ENCODE measurements at regions of chr10 and their contacts with region 1.

Region 1: DNA sequence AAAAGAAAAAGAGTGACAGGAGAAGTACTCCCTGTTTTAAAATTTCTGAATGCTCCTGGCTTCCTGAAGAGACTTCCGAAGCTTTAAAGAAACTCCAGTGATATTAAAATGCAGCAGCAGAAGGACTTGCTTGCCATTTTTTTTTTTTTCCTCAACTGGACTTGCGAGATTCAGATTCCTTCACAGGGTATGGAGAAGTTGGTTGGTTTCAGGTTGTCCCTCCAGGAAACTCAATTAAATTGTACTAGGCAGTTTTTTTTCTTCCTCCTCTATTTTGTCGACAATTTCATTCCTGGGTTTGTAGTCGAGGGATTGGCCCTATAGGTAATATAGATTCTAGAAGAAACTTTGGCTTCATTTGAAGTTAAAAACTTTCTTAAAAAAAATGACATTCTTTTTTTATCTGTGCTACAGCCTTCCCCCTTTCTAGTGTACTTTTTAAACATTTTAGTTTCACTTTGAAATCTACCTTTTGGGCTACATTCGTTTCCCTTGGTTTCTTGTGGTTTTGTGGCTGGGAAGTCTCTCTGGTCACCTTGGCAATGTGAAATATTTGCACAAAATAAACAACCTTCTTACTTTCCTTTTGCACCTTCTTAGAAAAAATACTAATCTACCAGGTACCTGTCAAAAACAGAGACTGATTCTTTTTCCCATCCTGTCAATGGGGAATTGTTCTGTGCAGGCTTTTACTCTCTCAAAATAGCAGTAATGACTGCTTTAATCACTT is 350.1 kb downstream of the GATA3 start:
- DNase-seq: peak in 6 of 9 experiments; percentile 31 to 93 (median 48)
- ATAC-seq: peak; percentile 71
- H3K4me3 ChIP-seq: peak overlapping the region; percentile 14 to 41
- H3K4me3 Mint-ChIP-seq: peak overlapping the region; percentile 74
- H3K27ac ChIP-seq: peak overlapping the region; percentile 66 to 83
- H3K27ac Mint-ChIP-seq: peak overlapping the region; percentile 90
- H3K4me1 ChIP-seq: peaks cover 43% of the 10 kb centered on the region
- H3K4me1 Mint-ChIP-seq: peaks cover 67% of the 10 kb centered on the region
- H3K27me3 ChIP-seq: no peaks in the 10 kb centered on the region
- H3K27me3 Mint-ChIP-seq: no peaks in the 10 kb centered on the region
- CTCF ChIP-seq: no peak

Region 2: DNA sequence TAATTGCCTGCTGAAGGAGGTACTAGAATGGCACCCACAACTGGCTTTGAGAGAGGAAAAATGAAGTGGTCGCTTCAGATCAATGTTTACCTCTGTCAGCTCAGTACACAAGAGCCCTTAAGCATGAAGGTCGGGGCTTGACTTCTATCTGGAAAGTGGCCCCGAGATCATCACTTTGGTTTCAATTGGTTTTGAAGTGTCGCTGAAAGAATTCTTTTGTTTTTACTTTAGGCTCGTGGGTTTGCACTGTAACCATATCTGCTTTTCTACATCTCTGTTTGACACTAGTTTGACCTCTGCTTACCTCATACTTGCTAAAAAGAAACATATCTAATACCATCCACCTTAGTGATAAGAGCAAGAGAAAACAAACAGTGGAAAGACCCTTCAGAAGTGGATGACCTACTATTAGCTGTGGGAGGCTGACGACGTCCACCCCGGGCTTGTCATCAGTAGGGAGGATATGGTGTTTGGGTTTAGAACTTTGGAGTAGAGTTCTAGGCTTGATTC is 11.7 kb after region 1 on chr10:
- CTCF ChIA-PET with region 1: no interaction called
- POLR2A ChIA-PET with region 1: interaction called, 11 read pairs
- intact Hi-C with region 1: loop called in 1 of 2 experiments (anchors 1 kb)
- DNase-seq: peak in 7 of 9 experiments; percentile 18 to 88 (median 44)
- ATAC-seq: peak; percentile 84
- H3K4me3 ChIP-seq: no peak overlapping the region
- H3K4me3 Mint-ChIP-seq: no peak overlapping the region
- H3K27ac ChIP-seq: peak overlapping the region; percentile 50 to 78
- H3K27ac Mint-ChIP-seq: peak overlapping the region; percentile 96
- H3K4me1 ChIP-seq: peaks cover 19% of the 10 kb centered on the region
- H3K4me1 Mint-ChIP-seq: peaks cover 30% of the 10 kb centered on the region
- H3K27me3 ChIP-seq: no peaks in the 10 kb centered on the region
- H3K27me3 Mint-ChIP-seq: no peaks in the 10 kb centered on the region
- CTCF ChIP-seq: no peak

Region 3: GRCh38 chr10:8444630-8445029 is 40.1 kb after region 1 on chr10:
- CTCF ChIA-PET with region 1: interaction called, 3 read pairs
- POLR2A ChIA-PET with region 1: interaction called, 3 read pairs
- intact Hi-C with region 1: loop called in 1 of 2 experiments (anchors 1 kb)
- DNase-seq: peak; percentile 9 to 82 (median 65)
- ATAC-seq: peak; percentile 100
- H3K4me3 ChIP-seq: no peak overlapping the region
- H3K4me3 Mint-ChIP-seq: no peak overlapping the region
- H3K27ac ChIP-seq: no peak overlapping the region
- H3K27ac Mint-ChIP-seq: no peak overlapping the region
- H3K4me1 ChIP-seq: peaks cover 6% of the 10 kb centered on the region
- H3K4me1 Mint-ChIP-seq: peaks cover 10% of the 10 kb centered on the region
- H3K27me3 ChIP-seq: no peaks in the 10 kb centered on the region
- H3K27me3 Mint-ChIP-seq: peaks cover 4% of the 10 kb centered on the region
- CTCF ChIP-seq: no peak